ENCODE measurements at regions of chr17 and their contacts with region 1.

Region 1: DNA sequence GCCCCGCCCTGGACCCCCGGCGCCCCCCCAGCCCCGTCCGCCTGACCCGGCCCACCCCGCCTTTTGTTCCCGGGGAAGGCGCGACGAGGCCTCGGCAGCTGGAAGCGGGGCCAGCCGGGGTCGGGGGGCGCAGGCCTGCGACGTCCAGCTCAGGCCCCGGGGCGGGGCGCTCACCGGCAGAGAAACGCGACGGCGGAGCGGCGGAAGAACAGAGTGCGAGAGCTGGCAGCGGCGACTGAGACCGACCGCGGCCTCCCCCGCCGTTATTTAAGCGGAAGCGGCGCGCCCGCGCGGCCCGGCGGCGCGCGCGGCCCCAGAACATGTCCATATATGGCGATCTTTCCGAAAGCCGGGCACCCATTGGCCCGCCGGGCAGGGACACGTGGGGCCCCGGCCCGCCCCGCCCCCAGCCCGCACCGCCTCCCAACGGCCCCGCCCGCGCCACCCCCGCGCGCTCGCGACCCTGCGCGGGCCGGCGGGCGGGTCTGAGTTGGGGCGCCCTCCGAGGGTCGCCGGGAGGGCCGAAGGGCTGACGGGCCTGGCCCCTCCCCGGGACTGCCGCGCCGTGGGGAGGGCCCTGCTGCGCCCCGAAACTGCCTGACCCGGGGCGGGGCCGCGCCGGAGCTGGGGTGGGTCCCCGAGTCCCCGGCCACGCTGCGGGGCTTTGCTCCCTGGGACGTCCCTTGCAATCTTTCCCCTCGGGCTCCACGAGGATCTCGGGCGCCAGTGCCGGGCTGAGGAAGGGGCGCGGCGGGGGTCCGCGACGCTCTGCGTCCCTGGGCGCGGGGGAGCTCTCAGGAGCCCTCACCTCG is at the start of gene ACTG1:
- DNase-seq: peak; percentile 87 to 96 (median 90)
- ATAC-seq: peak; percentile 56 to 75
- H3K4me3 Mint-ChIP-seq: peak within 1 kb of the TSS; percentile 95 to 100 (median 97)
- H3K27ac Mint-ChIP-seq: peak within 1 kb of the TSS; percentile 92 to 99 (median 97)
- H3K4me1 Mint-ChIP-seq: peaks cover 28 to 65% (median 55%) of the 10 kb centered on the region in 4 donors
- H3K27me3 Mint-ChIP-seq: no peaks in the 10 kb centered on the region
- polyA plus RNA-seq, gene ACTG1: 1,334 to 1,669 (median 1,595) TPM

Region 2: GRCh38 chr17:81238817-81239600 is 273.8 kb before region 1 on chr17 and contains the starts of genes NDUFAF8 and TEPSIN:
- POLR2A ChIA-PET with region 1: interaction called, 12 read pairs
- DNase-seq: peak; percentile 90 to 98 (median 96)
- ATAC-seq: peak; percentile 96
- H3K4me3 Mint-ChIP-seq: peak within 1 kb of the TSS; percentile 88 to 95 (median 93)
- H3K27ac Mint-ChIP-seq: peak within 1 kb of the TSS; percentile 68 to 95 (median 89)
- H3K4me1 Mint-ChIP-seq: peaks cover 13 to 56% (median 46%) of the 10 kb centered on the region in 4 donors
- H3K27me3 Mint-ChIP-seq: no peaks in the 10 kb centered on the region
- polyA plus RNA-seq, gene NDUFAF8: 85.2 to 135 (median 107) TPM
- polyA plus RNA-seq, gene TEPSIN: 2.7 to 2.8 (median 2.8) TPM

Region 3: DNA sequence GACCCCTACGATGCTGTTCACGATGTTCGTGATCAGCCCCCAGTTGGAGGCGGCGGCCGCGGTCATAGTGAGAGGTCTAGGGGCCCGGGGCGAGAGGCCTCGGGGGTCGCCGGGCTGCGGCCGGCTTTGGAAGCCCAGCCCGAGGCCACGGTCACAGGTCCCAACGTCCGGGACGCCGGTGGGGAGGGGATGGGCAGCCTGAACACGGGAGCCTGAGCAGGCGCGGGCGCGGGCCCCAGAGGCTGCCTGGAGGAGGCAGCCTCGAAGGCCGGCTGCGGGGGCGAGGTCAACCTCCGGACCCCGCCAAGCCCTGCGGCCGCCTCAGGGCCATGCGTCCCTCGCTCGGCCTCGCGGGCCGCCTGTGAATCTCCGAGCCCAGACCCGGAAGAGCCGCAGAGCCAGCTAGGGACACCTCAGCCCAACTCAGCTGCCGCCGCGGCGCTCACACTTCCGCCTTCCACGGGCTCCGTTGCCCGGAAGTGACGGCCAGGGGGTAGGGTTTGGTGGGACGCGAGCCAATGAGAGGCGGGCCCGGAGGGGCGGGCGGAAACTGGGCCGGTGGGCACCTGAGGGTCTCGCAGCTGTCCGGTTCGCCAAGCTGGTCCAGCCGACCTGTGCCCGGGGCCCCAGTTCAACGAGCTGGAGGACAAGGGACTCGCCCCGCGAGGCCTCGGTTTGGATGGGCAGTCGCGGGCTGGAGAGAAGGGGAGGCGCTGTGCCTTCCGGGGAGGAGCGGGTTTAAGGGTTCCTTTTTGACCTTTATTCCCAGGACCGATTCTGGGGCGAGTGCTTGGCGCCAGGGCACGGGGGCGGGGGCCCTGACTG is 217.7 kb before region 1 on chr17 and contains the start of gene SLC38A10:
- POLR2A ChIA-PET with region 1: interaction called, 22 read pairs
- DNase-seq: peak; percentile 81 to 93 (median 86)
- ATAC-seq: peak; percentile 84 to 90
- H3K4me3 Mint-ChIP-seq: peak within 1 kb of the TSS; percentile 93 to 99 (median 96)
- H3K27ac Mint-ChIP-seq: peak within 1 kb of the TSS; percentile 92 to 99 (median 97)
- H3K4me1 Mint-ChIP-seq: peaks cover 16 to 49% (median 39%) of the 10 kb centered on the region in 4 donors
- H3K27me3 Mint-ChIP-seq: no peaks in the 10 kb centered on the region
- polyA plus RNA-seq, gene SLC38A10: 32.6 to 53.8 (median 39.7) TPM

Region 4: DNA sequence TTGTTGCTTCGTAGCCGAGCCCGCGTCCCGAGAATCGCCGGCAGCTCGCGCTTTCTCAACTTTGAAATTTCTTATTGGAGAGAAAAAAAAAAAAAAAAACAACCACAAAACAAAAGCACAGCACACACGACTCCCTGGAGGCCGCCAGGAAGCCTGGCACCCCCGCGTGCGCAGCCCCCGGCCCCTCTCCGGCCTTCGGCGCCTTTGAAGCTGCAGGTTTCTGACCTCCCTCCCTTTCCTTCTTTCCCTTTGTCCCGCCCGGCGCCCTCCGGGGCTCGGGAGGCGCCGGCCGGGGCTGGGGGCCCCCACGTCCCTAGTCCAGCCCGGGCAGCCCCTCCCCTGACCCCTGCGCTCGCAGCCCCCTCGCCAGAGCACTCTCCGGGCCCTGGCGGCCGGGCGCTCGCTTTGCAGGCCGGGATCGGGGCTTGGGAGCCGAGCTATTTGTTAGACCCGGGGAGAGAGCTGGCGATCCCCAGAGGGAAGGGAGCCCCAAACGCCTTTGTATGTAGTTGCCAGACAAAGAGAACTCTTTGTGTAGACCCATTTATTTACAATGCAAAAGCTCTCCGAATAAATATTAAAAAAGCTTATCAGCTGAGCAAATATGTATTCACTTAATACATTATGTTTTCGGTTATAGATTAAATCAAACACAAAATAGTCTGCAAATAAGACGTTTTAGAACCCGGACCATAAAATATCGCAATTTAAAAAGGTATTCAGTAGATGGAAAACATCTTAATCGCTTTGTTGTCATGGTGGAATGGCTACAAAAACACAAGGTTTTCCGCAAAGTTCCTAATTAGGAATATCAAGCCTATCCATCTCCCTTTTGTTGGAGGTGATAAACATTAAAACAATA is 115.2 kb before region 1 on chr17:
- POLR2A ChIA-PET with region 1: interaction called, 14 read pairs
- DNase-seq: no peak
- ATAC-seq: no peak
- H3K4me3 Mint-ChIP-seq: peak overlapping the region; percentile 19 to 84 (median 60)
- H3K27ac Mint-ChIP-seq: peak overlapping the region in 3 of 10 donors; percentile 24 to 68 (median 53)
- H3K4me1 Mint-ChIP-seq: peaks cover 13 to 45% (median 32%) of the 10 kb centered on the region in 4 donors
- H3K27me3 Mint-ChIP-seq: peaks cover 30 to 64% (median 40%) of the 10 kb centered on the region in 5 donors

Region 5: GRCh38 chr17:81471804-81472456 is 40.8 kb before region 1 on chr17:
- POLR2A ChIA-PET with region 1: no interaction called
- DNase-seq: peak in 3 of 10 donors; percentile 21 to 40 (median 22)
- ATAC-seq: peak; percentile 54 to 59
- H3K4me3 Mint-ChIP-seq: no peak overlapping the region
- H3K27ac Mint-ChIP-seq: peak overlapping the region in 2 of 10 donors; percentile 11 to 13
- H3K4me1 Mint-ChIP-seq: no peaks in the 10 kb centered on the region
- H3K27me3 Mint-ChIP-seq: no peaks in the 10 kb centered on the region

Region 6: GRCh38 chr17:81484195-81484979 is 28.4 kb before region 1 on chr17:
- POLR2A ChIA-PET with region 1: interaction called, 176 read pairs
- DNase-seq: peak; percentile 74 to 92 (median 88)
- ATAC-seq: peak; percentile 62 to 71
- H3K4me3 Mint-ChIP-seq: peak overlapping the region in 6 of 10 donors; percentile 20 to 71 (median 44)
- H3K27ac Mint-ChIP-seq: no peak overlapping the region
- H3K4me1 Mint-ChIP-seq: peaks cover 4 to 30% (median 14%) of the 10 kb centered on the region in 4 donors
- H3K27me3 Mint-ChIP-seq: peaks cover 1 to 23% (median 13%) of the 10 kb centered on the region in 5 donors

Region 7: DNA sequence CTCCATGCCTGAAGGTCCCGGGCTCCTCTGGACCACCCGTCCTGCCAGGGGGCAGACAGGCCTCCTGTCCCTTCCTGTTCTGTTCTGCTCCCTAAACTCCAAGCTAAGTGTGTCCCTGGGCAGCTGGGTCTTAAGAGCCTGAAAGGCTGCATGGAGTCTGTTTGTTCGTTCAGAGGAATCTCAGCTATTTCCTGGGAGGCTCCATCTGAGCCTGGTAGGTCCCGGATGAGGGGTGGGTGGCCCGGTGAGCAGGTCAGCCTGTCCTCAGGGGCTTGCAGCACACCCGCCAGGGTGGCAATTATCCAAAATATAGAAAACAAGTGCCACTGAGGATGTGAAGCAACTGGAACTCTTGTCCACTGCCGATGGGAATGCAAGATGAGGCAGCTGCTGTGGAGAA is 12.7 kb before region 1 on chr17:
- POLR2A ChIA-PET with region 1: interaction called, 23 read pairs
- DNase-seq: no peak
- ATAC-seq: no peak
- H3K4me3 Mint-ChIP-seq: no peak overlapping the region
- H3K27ac Mint-ChIP-seq: no peak overlapping the region
- H3K4me1 Mint-ChIP-seq: no peaks in the 10 kb centered on the region
- H3K27me3 Mint-ChIP-seq: peaks cover 0 to 2% (median 0%) of the 10 kb centered on the region in 5 donors

Region 8: DNA sequence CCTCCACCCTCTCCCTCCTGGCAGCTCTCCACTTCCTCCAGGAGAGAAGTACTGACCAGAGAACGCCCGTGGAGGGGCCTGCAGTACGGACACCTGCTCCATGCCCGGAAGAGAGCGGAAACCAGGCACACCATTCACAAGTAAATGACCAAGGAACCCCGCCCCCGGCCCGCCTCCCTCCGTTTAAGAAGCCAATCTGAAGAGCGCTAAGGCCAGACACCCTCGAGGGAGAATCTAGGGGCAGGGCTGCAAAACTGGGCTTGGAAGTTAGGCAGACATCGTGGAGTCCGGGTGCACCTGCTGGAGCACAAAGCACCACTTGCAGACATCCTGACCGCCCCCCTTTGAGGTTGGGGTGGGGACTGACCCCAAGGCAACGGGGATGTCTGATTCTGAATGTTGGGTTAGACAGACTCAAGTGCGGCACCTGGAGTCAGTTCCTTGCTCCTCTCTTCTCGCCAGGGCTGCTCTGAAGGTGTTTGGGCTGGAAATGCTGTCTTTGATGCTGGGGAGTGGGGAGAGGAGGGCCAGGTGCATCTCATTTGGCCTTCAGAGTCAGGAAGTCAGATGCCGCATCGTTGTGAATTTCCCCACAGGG is 40.4 kb after region 1 on chr17:
- POLR2A ChIA-PET with region 1: interaction called, 140 read pairs
- DNase-seq: peak in 9 of 10 donors; percentile 57 to 85 (median 75)
- ATAC-seq: peak; percentile 73 to 76
- H3K4me3 Mint-ChIP-seq: peak overlapping the region; percentile 85 to 93 (median 89)
- H3K27ac Mint-ChIP-seq: peak overlapping the region; percentile 72 to 95 (median 92)
- H3K4me1 Mint-ChIP-seq: peaks cover 12 to 40% (median 31%) of the 10 kb centered on the region in 4 donors
- H3K27me3 Mint-ChIP-seq: no peaks in the 10 kb centered on the region